Activated T-helper 2 cell treated with anti-CD3 and anti-CD28 coated beads, Interferon-gamma antibody, Interleukin-2, Interleukin-4, amounts not matched to agents 10 μg/mL and 5 μg/mL and 100 μg/mL, durations not matched to agents 14 hours and 24 hours and 36 hours (primary cell): ENCODE measurements at regions of chr11 and their contacts with region 1.

Region 1: GRCh38 chr11:67288452-67289225 is 464 bp upstream of the ANKRD13D start:
- DNase-seq: peak; percentile 89
- H3K4me3 Mint-ChIP-seq: peak overlapping the region; percentile 81
- H3K27ac Mint-ChIP-seq: peak overlapping the region; percentile 96
- H3K4me1 Mint-ChIP-seq: peaks cover 44% of the 10 kb centered on the region
- H3K27me3 Mint-ChIP-seq: no peaks in the 10 kb centered on the region

Region 2: DNA sequence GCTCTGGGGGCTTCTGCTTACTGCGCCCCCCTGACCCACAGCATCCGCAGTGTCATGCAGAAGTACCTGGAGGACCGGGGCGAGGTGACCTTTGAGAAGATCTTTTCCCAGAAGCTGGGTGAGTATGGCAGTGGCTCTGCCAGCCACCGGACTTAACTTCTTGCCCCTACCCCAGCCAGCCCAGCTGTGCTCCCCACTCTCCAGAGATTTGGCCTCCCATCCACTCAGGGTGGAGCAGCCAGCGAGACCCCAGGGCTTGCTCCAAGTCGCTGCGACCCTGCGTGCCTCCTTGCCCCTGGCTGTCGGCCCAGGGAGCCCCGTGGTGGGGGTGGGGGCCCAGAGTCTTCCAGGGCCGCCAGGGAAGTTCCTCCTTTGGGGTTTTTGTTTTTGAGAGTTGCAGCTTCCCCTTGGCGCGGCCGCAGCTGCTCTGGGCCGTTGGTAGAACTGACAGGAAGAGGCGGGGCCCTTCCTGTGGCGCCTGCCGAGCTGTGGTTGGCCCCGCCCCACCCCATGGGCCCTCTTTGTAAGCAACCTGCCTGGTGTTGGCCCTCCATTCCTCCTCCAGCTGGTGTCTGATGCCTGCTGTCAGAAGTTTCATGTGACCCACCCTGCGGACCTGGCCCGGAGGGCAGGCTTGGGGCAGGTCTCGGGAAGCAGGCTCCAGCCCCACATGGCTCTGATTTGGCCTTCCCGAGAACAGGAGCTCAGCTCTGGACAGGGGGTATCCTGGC is 11.2 kb before region 1 on chr11:
- intact Hi-C with region 1: loop called (anchors 1 kb)
- DNase-seq: peak; percentile 90
- H3K4me3 Mint-ChIP-seq: peak overlapping the region; percentile 71
- H3K27ac Mint-ChIP-seq: peak overlapping the region; percentile 98
- H3K4me1 Mint-ChIP-seq: peaks cover 43% of the 10 kb centered on the region
- H3K27me3 Mint-ChIP-seq: no peaks in the 10 kb centered on the region

Region 3: DNA sequence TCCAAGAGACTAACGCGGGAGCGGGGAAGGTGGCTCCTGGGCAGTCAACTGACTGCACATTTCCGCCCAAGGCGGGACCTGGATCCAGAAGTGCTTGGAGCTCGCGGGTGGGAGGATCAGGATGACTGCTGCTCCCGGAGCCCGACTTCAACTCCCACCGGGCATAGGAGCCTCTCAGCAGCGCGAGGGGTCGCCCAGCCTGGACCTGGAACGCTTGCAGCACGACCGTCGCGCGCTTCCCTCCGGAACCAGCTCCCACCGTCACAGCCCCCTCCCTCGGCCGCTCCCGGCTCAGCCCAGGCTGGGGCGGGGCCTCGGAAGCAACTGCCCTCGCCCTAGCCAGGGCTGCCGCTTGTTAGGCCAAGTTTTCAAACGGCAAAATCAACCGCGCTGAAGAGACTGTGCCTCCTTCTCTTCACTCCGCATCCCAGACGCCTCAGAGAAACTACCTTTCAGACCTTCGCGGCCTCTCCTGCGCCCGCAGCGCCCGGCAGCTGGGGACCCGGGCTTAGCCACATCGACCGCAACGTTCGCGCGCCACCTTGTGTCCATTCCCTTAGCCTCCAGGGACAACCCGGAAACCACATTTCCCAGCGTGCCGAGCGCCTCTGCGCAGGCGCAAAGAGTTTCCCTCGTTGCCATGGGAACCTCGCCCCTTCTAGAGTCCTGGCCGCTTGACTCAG is 28.7 kb after region 1 on chr11:
- intact Hi-C with region 1: loop called (anchors 1 kb)
- DNase-seq: peak; percentile 98
- H3K4me3 Mint-ChIP-seq: peak overlapping the region; percentile 96
- H3K27ac Mint-ChIP-seq: peak overlapping the region; percentile 98
- H3K4me1 Mint-ChIP-seq: peaks cover 32% of the 10 kb centered on the region
- H3K27me3 Mint-ChIP-seq: peaks cover 3% of the 10 kb centered on the region